ENCODE measurements at regions of chr5 and their contacts with region 1.

Region 1: GRCh38 chr5:38809388-38810359 is 36.1 kb upstream of the OSMR start:
- DNase-seq: peak; percentile 89
- ATAC-seq: peak; percentile 93

Region 2: GRCh38 chr5:38420691-38421390 is 388.8 kb before region 1 on chr5:
- intact Hi-C with region 1: loop called (anchors 1 kb)
- DNase-seq: no peak
- ATAC-seq: peak; percentile 74

Region 3: GRCh38 chr5:38441453-38442246 is 368.0 kb before region 1 on chr5:
- intact Hi-C with region 1: loop called (anchors 1 kb)
- DNase-seq: peak; percentile 83
- ATAC-seq: peak; percentile 99

Region 4: GRCh38 chr5:38515646-38516045 is 294.0 kb before region 1 on chr5:
- intact Hi-C with region 1: loop called (anchors 10 kb)
- DNase-seq: no peak
- ATAC-seq: no peak

Region 5: DNA sequence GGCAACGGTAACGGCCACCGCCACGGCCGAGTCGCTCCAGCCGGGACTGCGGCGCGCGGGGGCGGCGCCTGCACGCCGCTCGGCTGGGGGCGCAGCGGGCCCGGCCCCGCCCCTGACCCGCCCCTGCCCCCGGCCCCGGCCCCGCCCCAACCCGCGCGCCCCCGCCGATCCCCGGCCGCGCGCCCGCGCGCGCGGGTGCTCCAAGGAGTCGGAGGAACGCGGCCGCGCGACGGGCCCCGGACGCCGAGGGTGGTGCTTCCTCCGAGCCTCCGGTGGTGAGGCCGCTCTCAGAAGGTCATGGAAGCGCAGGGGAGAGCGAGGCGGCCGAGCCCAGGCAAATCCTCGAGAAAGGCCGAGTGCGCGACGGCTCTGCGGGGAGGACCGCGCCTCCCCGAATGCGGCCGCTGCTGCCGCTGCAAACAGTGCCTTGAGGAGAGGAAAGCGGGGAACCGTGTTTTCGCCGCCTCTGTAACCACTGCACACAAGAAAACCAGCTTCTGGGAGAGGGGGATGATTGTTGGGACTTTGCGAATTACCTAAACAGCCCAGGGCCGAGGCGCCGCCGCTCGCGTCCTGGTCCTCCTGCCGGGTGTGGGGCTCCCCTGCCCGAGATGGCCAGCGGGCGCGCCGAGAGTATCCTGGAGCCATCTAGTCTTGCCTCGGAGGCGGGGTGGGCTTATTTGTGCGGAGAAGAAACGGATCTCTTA is 252.9 kb before region 1 on chr5 and contains the start of gene LIFR:
- intact Hi-C with region 1: loop called (anchors 5 kb)
- DNase-seq: peak; percentile 91
- ATAC-seq: peak; percentile 88
- total RNA-seq, gene LIFR: 56.1 TPM

Region 6: DNA sequence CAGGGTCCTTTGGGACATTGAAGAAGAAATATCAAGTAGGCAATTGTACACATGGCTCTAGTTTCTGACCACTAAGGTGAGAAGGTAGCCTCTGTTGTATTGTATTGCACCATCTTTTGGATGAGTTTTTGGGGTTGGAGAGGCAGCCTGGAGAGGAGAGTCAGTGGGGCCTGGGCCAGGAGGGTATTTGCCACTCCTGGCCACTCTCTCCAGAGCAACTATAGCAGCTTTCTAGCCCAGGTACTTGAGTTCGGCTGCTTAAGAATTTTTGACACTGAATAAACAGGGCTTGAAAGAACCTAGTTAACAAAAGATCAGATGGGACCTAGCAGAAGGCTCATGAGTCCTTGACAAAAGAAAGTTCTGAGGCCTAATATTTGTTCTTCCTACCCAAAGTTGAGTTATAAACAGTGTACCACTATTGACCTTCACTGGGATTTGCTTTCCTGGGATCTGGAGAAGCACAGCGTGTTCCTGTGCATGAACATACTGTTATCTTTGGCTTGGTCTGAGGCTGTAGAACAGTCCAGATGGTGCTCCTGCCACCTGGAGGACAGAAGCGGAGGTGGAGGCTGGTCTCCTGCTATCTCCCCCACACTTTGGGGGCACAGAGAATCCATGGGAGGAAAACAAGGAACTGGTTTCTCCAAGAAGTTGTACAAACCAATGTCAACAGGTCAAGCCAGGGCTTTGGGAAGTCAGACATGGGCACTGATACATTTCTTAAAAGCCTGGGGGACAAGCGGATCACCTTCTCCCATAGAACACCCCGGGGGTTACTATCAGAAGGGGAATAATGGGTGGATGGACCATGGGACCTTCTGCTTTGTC is 142.8 kb before region 1 on chr5:
- intact Hi-C with region 1: loop called (anchors 2 kb)
- DNase-seq: no peak
- ATAC-seq: peak; percentile 95

Region 7: GRCh38 chr5:38871058-38871605 is 61.5 kb after region 1 on chr5:
- intact Hi-C with region 1: no loop called
- DNase-seq: no peak
- ATAC-seq: no peak